ENCODE measurements at regions of chr7 and their contacts with region 1.

Region 1: GRCh38 chr7:123635551-123636359 is 19.9 kb upstream of the LMOD2 start:
- DNase-seq: peak; percentile 59
- H3K4me3 Mint-ChIP-seq: no peak overlapping the region
- H3K27ac Mint-ChIP-seq: no peak overlapping the region
- H3K4me1 Mint-ChIP-seq: peaks cover 22% of the 10 kb centered on the region
- H3K27me3 Mint-ChIP-seq: no peaks in the 10 kb centered on the region
- CTCF ChIP-seq: peak; percentile 70

Region 2: GRCh38 chr7:123534383-123535260 is 101.1 kb before region 1 on chr7 and contains the start of gene IQUB:
- CTCF ChIA-PET with region 1: no interaction called
- POLR2A ChIA-PET with region 1: no interaction called
- intact Hi-C with region 1: no loop called
- DNase-seq: peak; percentile 98
- H3K4me3 Mint-ChIP-seq: peak within 1 kb of the TSS; percentile 75
- H3K27ac Mint-ChIP-seq: peak within 1 kb of the TSS; percentile 43
- H3K4me1 Mint-ChIP-seq: peaks cover 22% of the 10 kb centered on the region
- H3K27me3 Mint-ChIP-seq: peaks cover 22% of the 10 kb centered on the region
- CTCF ChIP-seq: no peak
- total RNA-seq, gene IQUB: 0.16 and 0.17 TPM in 2 replicates

Region 3: GRCh38 chr7:123674399-123675180 is 38.8 kb after region 1 on chr7:
- CTCF ChIA-PET with region 1: interaction called, 8 read pairs
- POLR2A ChIA-PET with region 1: interaction called, 11 read pairs
- intact Hi-C with region 1: loop called (anchors 2 kb)
- DNase-seq: peak; percentile 70
- H3K4me3 Mint-ChIP-seq: no peak overlapping the region
- H3K27ac Mint-ChIP-seq: peak overlapping the region; percentile 46
- H3K4me1 Mint-ChIP-seq: peaks cover 21% of the 10 kb centered on the region
- H3K27me3 Mint-ChIP-seq: no peaks in the 10 kb centered on the region
- CTCF ChIP-seq: no peak

Region 4: GRCh38 chr7:123692471-123692877 is 56.7 kb after region 1 on chr7:
- CTCF ChIA-PET with region 1: interaction called, 12 read pairs
- POLR2A ChIA-PET with region 1: no interaction called
- intact Hi-C with region 1: no loop called
- DNase-seq: no peak
- H3K4me3 Mint-ChIP-seq: no peak overlapping the region
- H3K27ac Mint-ChIP-seq: no peak overlapping the region
- H3K4me1 Mint-ChIP-seq: no peaks in the 10 kb centered on the region
- H3K27me3 Mint-ChIP-seq: no peaks in the 10 kb centered on the region
- CTCF ChIP-seq: no peak

Region 5: DNA sequence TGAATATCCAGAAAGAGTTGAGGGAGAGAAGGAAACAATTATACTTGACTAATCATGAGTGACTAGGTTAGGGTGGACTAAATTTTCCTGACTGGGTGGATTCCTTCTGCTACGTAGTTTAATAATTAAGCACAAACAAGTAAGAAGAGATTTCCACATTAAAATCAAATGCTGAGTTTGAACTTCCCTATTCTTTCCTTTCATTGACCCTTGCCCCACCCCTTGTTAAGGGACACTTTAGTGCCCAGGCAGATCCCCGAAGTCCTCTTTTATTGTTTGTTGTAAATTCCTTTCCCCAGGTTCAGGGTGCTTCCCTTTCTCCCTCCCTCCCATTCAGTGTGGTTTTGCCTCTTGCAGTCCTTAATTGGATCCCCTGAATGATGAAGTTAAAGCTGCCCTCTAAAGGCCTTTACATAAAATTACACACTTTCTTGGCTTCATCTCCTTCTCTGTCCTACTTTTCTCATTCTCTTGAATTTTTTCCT is 280.5 kb after region 1 on chr7:
- CTCF ChIA-PET with region 1: no interaction called
- POLR2A ChIA-PET with region 1: interaction called, 3 read pairs
- intact Hi-C with region 1: loop called (anchors 2 kb)
- DNase-seq: peak; percentile 47
- H3K4me3 Mint-ChIP-seq: no peak overlapping the region
- H3K27ac Mint-ChIP-seq: no peak overlapping the region
- H3K4me1 Mint-ChIP-seq: peaks cover 6% of the 10 kb centered on the region
- H3K27me3 Mint-ChIP-seq: no peaks in the 10 kb centered on the region
- CTCF ChIP-seq: peak; percentile 20

Measured in MCF 10A (cell line).